Testis (tissue), 5 donors: ENCODE measurements at regions of chr10 and their contacts with region 1.

Region 1: GRCh38 chr10:102420810-102421644 is at the start of gene FBXL15:
- DNase-seq: peak; percentile 96
- H3K4me3 ChIP-seq: peak within 1 kb of the TSS; percentile 80 to 96
- H3K27ac ChIP-seq: peak within 1 kb of the TSS; percentile 74 to 80
- H3K4me1 ChIP-seq: peaks cover 23% of the 10 kb centered on the region
- H3K27me3 ChIP-seq: no peaks in the 10 kb centered on the region
- CTCF ChIP-seq: peak in 1 of 3 experiments; percentile 41
- POLR2A ChIP-seq: no peak
- total RNA-seq, gene FBXL15: 28.9 to 32.2 TPM

Region 2: GRCh38 chr10:102476466-102477141 is 55.6 kb after region 1 on chr10:
- intact Hi-C with region 1: loop called (anchors 10 kb)
- DNase-seq: no peak
- H3K4me3 ChIP-seq: no peak overlapping the region
- H3K27ac ChIP-seq: no peak overlapping the region
- H3K4me1 ChIP-seq: no peaks in the 10 kb centered on the region
- H3K27me3 ChIP-seq: no peaks in the 10 kb centered on the region
- CTCF ChIP-seq: no peak
- POLR2A ChIP-seq: no peak

Region 3: GRCh38 chr10:102583435-102584417 is 162.7 kb after region 1 on chr10:
- intact Hi-C with region 1: loop called (anchors 10 kb)
- DNase-seq: peak; percentile 95
- H3K4me3 ChIP-seq: no peak overlapping the region
- H3K27ac ChIP-seq: no peak overlapping the region
- H3K4me1 ChIP-seq: peaks cover 48% of the 10 kb centered on the region
- H3K27me3 ChIP-seq: no peaks in the 10 kb centered on the region
- CTCF ChIP-seq: peak; percentile 75 to 82 (median 81)
- POLR2A ChIP-seq: no peak